ENCODE measurements at regions of chr16 and their contacts with region 1.

Region 1: GRCh38 chr16:13919683-13920509 is at the start of gene ERCC4:
- DNase-seq: peak; percentile 98 to 100 (median 99)
- ATAC-seq: peak; percentile 94
- H3K4me3 ChIP-seq: peak within 1 kb of the TSS; percentile 94
- H3K4me3 Mint-ChIP-seq: peak within 1 kb of the TSS; percentile 80
- H3K27ac ChIP-seq: peak within 1 kb of the TSS; percentile 57 to 62
- H3K27ac Mint-ChIP-seq: peak within 1 kb of the TSS; percentile 47
- H3K4me1 ChIP-seq: peaks cover 21% of the 10 kb centered on the region
- H3K4me1 Mint-ChIP-seq: peaks cover 29% of the 10 kb centered on the region
- H3K27me3 ChIP-seq: no peaks in the 10 kb centered on the region
- H3K27me3 Mint-ChIP-seq: no peaks in the 10 kb centered on the region
- CTCF ChIP-seq: peak; percentile 93
- total RNA-seq, gene ERCC4: 8.5 to 10.1 TPM

Region 2: GRCh38 chr16:12803203-12804097 is 1116.4 kb before region 1 on chr16 and contains the start of gene CPPED1:
- CTCF ChIA-PET with region 1: no interaction called
- POLR2A ChIA-PET with region 1: no interaction called
- intact Hi-C with region 1: loop called in 1 of 2 experiments (anchors 5 kb)
- DNase-seq: peak; percentile 82 to 95 (median 88)
- ATAC-seq: peak; percentile 95
- H3K4me3 ChIP-seq: peak within 1 kb of the TSS; percentile 83
- H3K4me3 Mint-ChIP-seq: peak within 1 kb of the TSS; percentile 93
- H3K27ac ChIP-seq: peak within 1 kb of the TSS; percentile 71 to 80
- H3K27ac Mint-ChIP-seq: peak within 1 kb of the TSS; percentile 87
- H3K4me1 ChIP-seq: peaks cover 17% of the 10 kb centered on the region
- H3K4me1 Mint-ChIP-seq: peaks cover 23% of the 10 kb centered on the region
- H3K27me3 ChIP-seq: no peaks in the 10 kb centered on the region
- H3K27me3 Mint-ChIP-seq: no peaks in the 10 kb centered on the region
- CTCF ChIP-seq: no peak
- total RNA-seq, gene CPPED1: 1.4 to 2.3 TPM

Region 3: GRCh38 chr16:13680021-13680889 is 239.6 kb before region 1 on chr16:
- CTCF ChIA-PET with region 1: no interaction called
- POLR2A ChIA-PET with region 1: no interaction called
- intact Hi-C with region 1: no loop called
- DNase-seq: no peak
- ATAC-seq: no peak
- H3K4me3 ChIP-seq: no peak overlapping the region
- H3K4me3 Mint-ChIP-seq: no peak overlapping the region
- H3K27ac ChIP-seq: no peak overlapping the region
- H3K27ac Mint-ChIP-seq: no peak overlapping the region
- H3K4me1 ChIP-seq: no peaks in the 10 kb centered on the region
- H3K4me1 Mint-ChIP-seq: no peaks in the 10 kb centered on the region
- H3K27me3 ChIP-seq: no peaks in the 10 kb centered on the region
- H3K27me3 Mint-ChIP-seq: no peaks in the 10 kb centered on the region
- CTCF ChIP-seq: no peak

Region 4: DNA sequence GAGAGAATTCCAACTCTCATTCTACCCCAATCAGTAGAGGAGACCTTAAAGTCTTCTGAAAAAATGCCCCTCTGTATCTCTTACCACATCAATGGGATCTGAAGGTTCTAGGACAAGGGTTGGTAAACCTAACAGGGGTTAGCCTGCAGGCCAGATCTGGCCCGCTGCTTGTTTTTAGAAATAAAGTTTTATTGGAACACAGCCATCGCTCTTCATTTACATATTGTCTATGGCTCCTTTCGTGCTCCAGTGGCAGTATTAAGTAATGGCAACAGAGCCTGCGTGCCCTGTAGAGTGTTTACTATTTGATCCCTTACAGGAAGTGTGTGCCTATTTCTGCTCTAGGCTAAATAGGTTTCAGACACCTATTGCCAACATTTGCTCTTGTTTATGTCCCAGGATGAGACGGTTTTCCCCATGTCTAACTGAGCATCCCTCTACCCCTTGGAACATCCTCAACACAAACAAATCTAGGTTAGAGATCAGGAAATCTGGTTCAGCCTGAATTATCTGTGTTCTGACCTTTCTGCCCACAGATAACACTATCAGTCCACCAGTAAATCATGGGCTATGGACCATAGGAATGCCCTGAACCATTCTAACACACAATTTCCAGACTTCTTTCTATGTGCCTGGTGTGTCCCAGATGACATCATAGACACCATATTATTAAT is 44.1 kb before region 1 on chr16:
- CTCF ChIA-PET with region 1: no interaction called
- POLR2A ChIA-PET with region 1: no interaction called
- intact Hi-C with region 1: no loop called
- DNase-seq: no peak
- ATAC-seq: no peak
- H3K4me3 ChIP-seq: no peak overlapping the region
- H3K4me3 Mint-ChIP-seq: no peak overlapping the region
- H3K27ac ChIP-seq: no peak overlapping the region
- H3K27ac Mint-ChIP-seq: no peak overlapping the region
- H3K4me1 ChIP-seq: no peaks in the 10 kb centered on the region
- H3K4me1 Mint-ChIP-seq: no peaks in the 10 kb centered on the region
- H3K27me3 ChIP-seq: peaks cover 0 to 13% of the 10 kb centered on the region in 2 experiments
- H3K27me3 Mint-ChIP-seq: peaks cover 18% of the 10 kb centered on the region
- CTCF ChIP-seq: no peak

Region 5: GRCh38 chr16:13935408-13935807 is 15.5 kb after region 1 on chr16:
- CTCF ChIA-PET with region 1: interaction called, 12 read pairs
- POLR2A ChIA-PET with region 1: no interaction called
- intact Hi-C with region 1: no loop called
- DNase-seq: peak in 3 of 14 experiments; percentile 32 to 42 (median 35)
- ATAC-seq: no peak
- H3K4me3 ChIP-seq: no peak overlapping the region
- H3K4me3 Mint-ChIP-seq: no peak overlapping the region
- H3K27ac ChIP-seq: no peak overlapping the region
- H3K27ac Mint-ChIP-seq: no peak overlapping the region
- H3K4me1 ChIP-seq: no peaks in the 10 kb centered on the region
- H3K4me1 Mint-ChIP-seq: no peaks in the 10 kb centered on the region
- H3K27me3 ChIP-seq: no peaks in the 10 kb centered on the region
- H3K27me3 Mint-ChIP-seq: no peaks in the 10 kb centered on the region
- CTCF ChIP-seq: peak; percentile 58

Region 6: DNA sequence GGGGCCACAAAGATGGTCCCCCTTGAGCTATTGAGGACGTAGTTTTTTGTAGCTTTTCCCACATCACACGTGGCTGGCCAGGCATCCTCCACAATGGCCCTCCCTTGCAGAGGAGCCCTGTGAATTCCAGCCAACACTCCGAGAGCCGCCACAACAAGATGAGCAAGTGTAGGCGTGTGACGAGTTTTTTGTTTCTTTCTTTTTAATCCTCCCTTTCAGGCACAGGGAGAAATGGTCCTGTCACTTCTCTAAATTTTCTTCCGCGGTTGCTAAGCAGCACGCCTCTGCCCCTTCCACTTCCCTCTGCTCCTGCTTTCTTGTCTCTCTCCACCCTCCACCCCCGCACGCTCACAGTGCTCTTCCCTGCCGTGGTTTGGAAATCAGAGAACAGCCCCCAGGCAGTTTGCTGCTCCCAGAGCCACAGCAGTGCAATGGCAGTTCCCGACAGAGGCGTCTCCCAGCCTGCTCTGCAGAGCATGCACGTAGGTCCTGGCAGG is 83.2 kb after region 1 on chr16:
- CTCF ChIA-PET with region 1: no interaction called
- POLR2A ChIA-PET with region 1: no interaction called
- intact Hi-C with region 1: no loop called
- DNase-seq: peak in 2 of 14 experiments; percentile 11 to 17
- ATAC-seq: no peak
- H3K4me3 ChIP-seq: no peak overlapping the region
- H3K4me3 Mint-ChIP-seq: no peak overlapping the region
- H3K27ac ChIP-seq: no peak overlapping the region
- H3K27ac Mint-ChIP-seq: no peak overlapping the region
- H3K4me1 ChIP-seq: peaks cover 6% of the 10 kb centered on the region
- H3K4me1 Mint-ChIP-seq: peaks cover 22% of the 10 kb centered on the region
- H3K27me3 ChIP-seq: no peaks in the 10 kb centered on the region
- H3K27me3 Mint-ChIP-seq: peaks cover 12% of the 10 kb centered on the region
- CTCF ChIP-seq: no peak

Region 7: GRCh38 chr16:14202697-14203096 is 282.8 kb after region 1 on chr16:
- CTCF ChIA-PET with region 1: no interaction called
- POLR2A ChIA-PET with region 1: no interaction called
- intact Hi-C with region 1: loop called in 1 of 2 experiments (anchors 10 kb)
- DNase-seq: no peak
- ATAC-seq: no peak
- H3K4me3 ChIP-seq: no peak overlapping the region
- H3K4me3 Mint-ChIP-seq: no peak overlapping the region
- H3K27ac ChIP-seq: no peak overlapping the region
- H3K27ac Mint-ChIP-seq: no peak overlapping the region
- H3K4me1 ChIP-seq: no peaks in the 10 kb centered on the region
- H3K4me1 Mint-ChIP-seq: peaks cover 14% of the 10 kb centered on the region
- H3K27me3 ChIP-seq: no peaks in the 10 kb centered on the region
- H3K27me3 Mint-ChIP-seq: no peaks in the 10 kb centered on the region
- CTCF ChIP-seq: no peak

Region 8: DNA sequence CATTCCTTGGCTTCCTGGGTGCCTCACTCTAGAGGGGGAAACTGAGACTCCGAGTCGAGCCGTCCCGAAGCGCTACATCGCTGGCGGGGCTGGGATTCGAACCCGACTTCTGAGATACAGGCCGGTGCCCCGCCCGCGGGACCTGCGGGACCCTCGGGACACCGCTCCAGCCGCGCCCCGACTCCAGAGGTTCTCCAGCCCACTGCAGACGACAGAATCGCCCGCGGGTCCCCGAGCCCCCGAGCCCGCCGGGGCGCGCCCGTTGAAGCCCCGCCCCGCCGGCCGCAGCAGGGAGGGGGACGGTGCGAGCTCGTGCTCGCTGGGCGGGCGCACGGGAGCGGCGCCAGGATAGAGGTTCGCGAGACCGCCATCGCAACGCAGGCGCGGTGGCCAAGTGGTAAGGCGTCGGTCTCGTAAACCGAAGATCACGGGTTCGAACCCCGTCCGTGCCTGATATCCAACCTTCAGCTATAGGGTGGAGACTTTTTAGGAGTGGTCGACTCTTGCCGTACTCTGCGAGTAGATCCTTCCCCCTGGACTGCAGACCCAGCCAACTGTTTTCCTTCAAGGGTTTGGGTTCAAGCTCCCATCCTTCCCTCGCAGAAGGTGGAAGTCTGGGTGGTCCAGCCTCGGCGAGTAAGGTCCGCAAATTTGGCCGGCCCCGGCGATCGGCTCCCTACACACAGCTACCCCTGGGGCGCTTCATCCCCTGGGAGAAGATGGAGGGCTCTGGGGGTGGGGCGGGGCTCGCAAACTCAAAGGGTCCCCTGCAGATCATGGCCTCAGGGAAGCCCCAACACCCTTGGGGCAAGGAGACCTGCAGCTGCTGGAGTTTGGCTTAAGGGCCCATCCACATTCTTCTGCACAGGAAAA is 365.9 kb after region 1 on chr16:
- CTCF ChIA-PET with region 1: interaction called, 9 read pairs
- POLR2A ChIA-PET with region 1: interaction called, 19 read pairs
- intact Hi-C with region 1: loop called (anchors 2 kb)
- DNase-seq: peak; percentile 88 to 99 (median 96)
- ATAC-seq: peak; percentile 76
- H3K4me3 ChIP-seq: peak overlapping the region; percentile 99
- H3K4me3 Mint-ChIP-seq: peak overlapping the region; percentile 99
- H3K27ac ChIP-seq: peak overlapping the region; percentile 52 to 63
- H3K27ac Mint-ChIP-seq: peak overlapping the region; percentile 90
- H3K4me1 ChIP-seq: peaks cover 22% of the 10 kb centered on the region
- H3K4me1 Mint-ChIP-seq: peaks cover 23% of the 10 kb centered on the region
- H3K27me3 ChIP-seq: no peaks in the 10 kb centered on the region
- H3K27me3 Mint-ChIP-seq: peaks cover 14% of the 10 kb centered on the region
- CTCF ChIP-seq: no peak

Region 9: GRCh38 chr16:14600164-14600563 is 680.3 kb after region 1 on chr16:
- CTCF ChIA-PET with region 1: interaction called, 3 read pairs
- POLR2A ChIA-PET with region 1: no interaction called
- intact Hi-C with region 1: loop called (anchors 1 to 10 kb)
- DNase-seq: peak in 3 of 14 experiments; percentile 14 to 35 (median 31)
- ATAC-seq: no peak
- H3K4me3 ChIP-seq: no peak overlapping the region
- H3K4me3 Mint-ChIP-seq: no peak overlapping the region
- H3K27ac ChIP-seq: no peak overlapping the region
- H3K27ac Mint-ChIP-seq: no peak overlapping the region
- H3K4me1 ChIP-seq: no peaks in the 10 kb centered on the region
- H3K4me1 Mint-ChIP-seq: no peaks in the 10 kb centered on the region
- H3K27me3 ChIP-seq: no peaks in the 10 kb centered on the region
- H3K27me3 Mint-ChIP-seq: no peaks in the 10 kb centered on the region
- CTCF ChIP-seq: peak; percentile 31